Breast epithelium (tissue), 4 donors: ENCODE measurements at regions of chr18 and their contacts with region 1.

Region 1: GRCh38 chr18:62729487-62730386 is 14.4 kb downstream of the PHLPP1 start:
- DNase-seq: no peak
- H3K4me3 ChIP-seq: no peak overlapping the region
- H3K27ac ChIP-seq: no peak overlapping the region
- H3K4me1 ChIP-seq: no peaks in the 10 kb centered on the region
- H3K27me3 ChIP-seq: no peaks in the 10 kb centered on the region
- CTCF ChIP-seq: no peak
- POLR2A ChIP-seq: no peak

Region 2: GRCh38 chr18:62795813-62796212 is 66.1 kb after region 1 on chr18:
- intact Hi-C with region 1: loop called (anchors 2 kb)
- DNase-seq: no peak
- H3K4me3 ChIP-seq: no peak overlapping the region
- H3K27ac ChIP-seq: no peak overlapping the region
- H3K4me1 ChIP-seq: no peaks in the 10 kb centered on the region
- H3K27me3 ChIP-seq: no peaks in the 10 kb centered on the region
- CTCF ChIP-seq: no peak
- POLR2A ChIP-seq: no peak

Region 3: DNA sequence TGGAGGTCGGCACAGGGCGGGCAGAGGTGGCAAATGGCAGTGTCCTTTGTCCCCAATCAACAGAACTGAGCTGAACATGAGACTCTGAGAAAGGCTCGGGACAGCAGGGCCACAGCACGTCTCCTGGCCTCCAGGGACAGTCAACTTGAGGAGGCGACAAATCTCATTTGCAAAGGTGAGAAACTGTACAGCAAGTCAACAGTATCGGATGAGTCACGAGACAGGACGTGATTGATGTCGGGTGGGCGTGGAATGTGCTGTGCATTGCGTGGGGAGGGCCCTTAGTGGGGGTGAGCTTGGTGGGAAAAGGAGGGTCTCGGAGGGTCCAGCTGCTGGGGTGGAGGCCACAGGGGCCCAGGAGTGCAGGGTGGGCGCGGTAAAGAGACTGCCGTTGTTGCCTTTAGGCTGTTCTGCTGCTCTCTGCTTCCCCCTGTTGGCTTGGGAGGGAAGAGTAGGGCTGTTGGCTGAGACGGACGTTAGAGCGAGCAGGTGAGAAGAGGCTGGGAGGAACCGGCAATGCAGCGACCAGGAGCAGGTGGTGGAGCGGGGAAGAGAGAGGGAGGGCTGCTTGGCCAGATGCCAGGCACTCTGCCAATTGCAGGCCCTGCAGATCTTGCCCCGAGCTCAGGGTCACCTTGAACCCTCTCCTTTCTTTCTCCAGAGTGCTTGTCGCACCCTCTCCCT is 425.6 kb after region 1 on chr18:
- intact Hi-C with region 1: no loop called
- DNase-seq: peak in 1 of 2 donors; percentile 79
- H3K4me3 ChIP-seq: peak overlapping the region in 2 of 3 donors; percentile 22 to 32
- H3K27ac ChIP-seq: peak overlapping the region; percentile 84 to 88
- H3K4me1 ChIP-seq: peaks cover 0 to 20% of the 10 kb centered on the region in 2 donors
- H3K27me3 ChIP-seq: no peaks in the 10 kb centered on the region
- CTCF ChIP-seq: peak; percentile 60 to 83 (median 80)
- POLR2A ChIP-seq: no peak